ENCODE measurements at regions of chr1 and their contacts with region 1.

Region 1: GRCh38 chr1:151594143-151594625 is 17.7 kb upstream of the SNX27 start:
- DNase-seq: no peak
- ATAC-seq: peak; percentile 84
- H3K4me3 ChIP-seq: 0 out of 4 replicates have a peak overlapping the region, but pooled peaks of 1 of the 2 experiments have one; percentile 18
- H3K27ac ChIP-seq: peak overlapping the region; percentile 52; the same call in 1 of the 2 replicates
- H3K4me1 ChIP-seq: peaks cover 17% of the 10 kb centered on the region
- H3K27me3 ChIP-seq: no peaks in the 10 kb centered on the region
- CTCF ChIP-seq: peak; percentile 98

Region 2: GRCh38 chr1:151668090-151668489 is 73.9 kb after region 1 on chr1:
- CTCF ChIA-PET with region 1: no interaction called
- POLR2A ChIA-PET with region 1: no interaction called
- in situ Hi-C with region 1: no loop called
- intact Hi-C with region 1: loop called (anchors 2 kb)
- DNase-seq: no peak
- ATAC-seq: no peak
- H3K4me3 ChIP-seq: no peak overlapping the region
- H3K27ac ChIP-seq: no peak overlapping the region
- H3K4me1 ChIP-seq: no peaks in the 10 kb centered on the region
- H3K27me3 ChIP-seq: no peaks in the 10 kb centered on the region
- CTCF ChIP-seq: no peak

Region 3: DNA sequence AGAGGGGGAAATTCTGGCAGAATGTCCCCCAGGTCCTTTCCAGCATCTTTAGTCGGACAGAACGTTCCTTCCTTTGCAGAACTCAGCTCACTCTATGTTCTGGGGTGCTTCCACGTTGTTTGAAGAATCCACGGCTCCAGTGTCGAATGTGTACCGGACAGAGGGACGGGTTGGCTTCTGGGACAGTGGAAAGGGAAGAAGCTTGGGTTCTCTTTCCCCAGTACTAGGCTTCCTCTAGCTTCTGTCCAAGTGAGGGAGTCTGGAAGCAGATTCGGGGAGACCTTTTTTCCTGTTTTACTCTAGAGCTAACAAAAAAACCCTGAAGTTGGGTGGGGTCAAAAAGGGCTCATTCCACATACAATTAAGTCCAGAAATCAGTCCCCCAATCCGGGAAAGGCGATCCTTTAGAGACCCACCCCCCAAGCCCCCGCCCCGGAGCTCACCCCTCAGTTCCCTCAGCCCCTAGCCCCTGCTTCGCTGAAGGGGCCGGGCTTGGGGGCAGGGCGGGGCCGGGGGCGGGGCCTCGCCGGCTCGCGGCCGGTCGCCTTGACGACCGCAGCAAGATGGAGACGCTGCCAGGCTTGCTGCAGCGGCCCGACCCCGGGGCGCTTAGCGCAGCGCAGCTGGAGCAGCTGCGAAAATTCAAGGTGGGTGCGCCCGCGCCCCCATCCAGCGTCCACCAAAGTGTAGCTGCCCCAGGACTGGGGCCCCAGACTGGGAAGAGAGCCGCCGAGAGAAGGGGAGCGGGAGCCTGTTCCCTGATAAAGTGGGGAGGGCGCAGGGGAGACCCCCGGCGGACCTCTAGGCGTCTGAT is 127.0 kb after region 1 on chr1 and contains the start of gene RIIAD1:
- CTCF ChIA-PET with region 1: interaction called, 3 read pairs
- POLR2A ChIA-PET with region 1: interaction called, 21 read pairs
- in situ Hi-C with region 1: no loop called
- intact Hi-C with region 1: no loop called
- DNase-seq: no peak
- ATAC-seq: peak; percentile 85
- H3K4me3 ChIP-seq: peak within 1 kb of the TSS; percentile 47 to 61
- H3K27ac ChIP-seq: peak within 1 kb of the TSS; percentile 65
- H3K4me1 ChIP-seq: peaks cover 7% of the 10 kb centered on the region
- H3K27me3 ChIP-seq: peaks cover 10% of the 10 kb centered on the region
- CTCF ChIP-seq: no peak
- total RNA-seq, gene RIIAD1: not detected

Region 4: DNA sequence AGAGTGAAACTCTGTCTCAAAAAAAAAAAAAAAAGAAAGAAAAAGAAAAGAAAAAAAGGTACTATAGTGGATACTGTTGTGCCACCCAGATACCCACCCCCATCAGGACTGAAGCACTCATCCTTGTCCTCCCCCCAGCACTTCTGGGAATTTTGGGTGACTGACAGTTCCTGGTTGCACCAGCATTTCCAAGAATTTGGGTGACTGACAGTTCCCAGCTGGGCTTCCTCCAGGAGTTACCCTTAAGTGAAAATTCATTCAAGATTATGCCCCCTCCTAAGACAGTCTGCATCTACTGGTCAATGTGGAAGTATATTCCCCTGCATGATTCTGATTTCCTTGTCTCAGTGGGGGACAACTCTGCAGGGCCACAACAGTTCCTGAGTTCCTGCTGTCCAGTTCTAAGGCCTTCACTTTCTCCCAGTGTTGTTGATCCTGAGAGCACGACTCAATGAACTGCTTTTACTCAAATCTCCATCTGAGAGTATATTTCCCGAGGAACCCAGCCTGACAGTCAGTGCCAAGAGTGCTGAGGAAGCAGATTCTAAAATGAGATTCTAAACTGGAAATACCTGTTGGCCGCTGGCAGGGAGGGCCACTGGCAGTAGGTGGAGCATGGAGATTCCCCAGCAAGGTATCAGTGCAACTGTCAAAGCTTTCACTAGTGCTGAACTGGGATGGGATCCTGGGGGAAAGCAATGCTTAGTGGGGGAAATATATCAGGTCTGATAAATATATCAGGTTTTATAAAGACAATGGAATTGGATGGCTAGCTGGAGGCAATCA is 145.6 kb after region 1 on chr1:
- CTCF ChIA-PET with region 1: no interaction called
- POLR2A ChIA-PET with region 1: no interaction called
- in situ Hi-C with region 1: no loop called
- intact Hi-C with region 1: loop called (anchors 5 kb)
- DNase-seq: no peak
- ATAC-seq: no peak
- H3K4me3 ChIP-seq: no peak overlapping the region
- H3K27ac ChIP-seq: no peak overlapping the region
- H3K4me1 ChIP-seq: no peaks in the 10 kb centered on the region
- H3K27me3 ChIP-seq: peaks cover 2% of the 10 kb centered on the region; the same call in 1 of the 2 replicates
- CTCF ChIP-seq: no peak

Measured in Panc1 (cell line).